GM13977 (cell line): ENCODE measurements at regions of chr5 and their contacts with region 1.

Region 1: GRCh38 chr5:151740336-151740942 is 18.0 kb downstream of the ATOX1 start:
- DNase-seq: peak; percentile 60
- CTCF ChIP-seq: peak; percentile 79

Region 2: DNA sequence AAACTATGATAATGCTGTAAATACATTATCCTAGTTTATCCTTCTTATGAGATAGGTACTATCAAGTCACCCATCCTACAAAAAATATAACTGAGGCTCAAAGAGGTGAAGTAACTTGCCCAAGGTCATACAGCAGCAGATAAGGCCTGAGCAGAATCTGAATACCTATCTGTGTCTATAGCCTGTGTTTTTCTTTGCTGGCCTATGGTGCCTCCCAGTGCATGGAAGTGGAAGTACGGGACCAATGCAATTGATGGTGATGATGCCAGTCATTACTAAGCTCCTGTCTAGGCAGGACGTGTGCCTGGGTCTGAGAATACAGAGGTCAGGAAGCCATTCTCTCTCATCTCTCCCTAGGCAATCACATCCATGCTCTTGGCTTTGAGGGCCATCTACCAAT is 217.1 kb before region 1 on chr5:
- in situ Hi-C with region 1: loop called (anchors 25 kb)
- DNase-seq: peak; percentile 75
- CTCF ChIP-seq: peak; percentile 70

Region 3: DNA sequence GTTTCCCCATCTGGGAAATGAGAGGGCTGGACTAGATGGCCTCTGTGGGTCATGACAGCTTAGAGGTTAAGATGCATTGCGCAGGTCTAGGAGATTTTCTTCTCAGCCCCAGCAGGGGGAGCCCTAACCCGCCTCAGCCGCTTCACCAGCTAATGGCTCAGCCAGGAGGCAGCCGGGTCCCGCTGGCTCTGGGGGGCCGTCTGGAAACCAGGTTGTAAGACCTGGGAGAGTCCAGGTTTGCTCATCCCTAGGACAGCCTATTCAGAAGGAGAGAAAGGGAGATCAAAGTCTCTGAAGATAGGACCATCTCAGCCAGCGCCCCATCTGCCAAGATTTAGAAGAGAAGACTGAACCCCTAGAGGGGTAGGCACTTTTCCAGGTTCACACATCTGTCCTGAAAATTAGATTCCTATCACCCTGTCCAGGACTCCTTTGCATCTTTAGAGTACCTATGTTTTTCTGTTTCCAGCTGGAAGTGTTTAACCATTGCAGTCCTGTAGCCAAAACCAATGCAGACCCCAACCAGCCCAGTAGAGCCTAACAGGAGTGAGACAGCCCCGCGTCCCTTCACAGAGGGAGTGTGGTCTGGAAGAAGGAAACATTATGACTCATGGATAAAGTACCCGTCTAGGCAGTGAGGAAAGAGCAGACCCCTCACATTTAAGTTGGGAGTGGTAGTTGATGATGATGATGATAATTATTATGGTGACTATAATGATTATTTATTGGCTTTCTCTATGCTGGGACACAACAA is 81.3 kb before region 1 on chr5:
- in situ Hi-C with region 1: loop called (anchors 5 kb)
- DNase-seq: peak; percentile 72
- CTCF ChIP-seq: peak; percentile 90